ENCODE measurements at regions of chr6 and their contacts with region 1.

Region 1: DNA sequence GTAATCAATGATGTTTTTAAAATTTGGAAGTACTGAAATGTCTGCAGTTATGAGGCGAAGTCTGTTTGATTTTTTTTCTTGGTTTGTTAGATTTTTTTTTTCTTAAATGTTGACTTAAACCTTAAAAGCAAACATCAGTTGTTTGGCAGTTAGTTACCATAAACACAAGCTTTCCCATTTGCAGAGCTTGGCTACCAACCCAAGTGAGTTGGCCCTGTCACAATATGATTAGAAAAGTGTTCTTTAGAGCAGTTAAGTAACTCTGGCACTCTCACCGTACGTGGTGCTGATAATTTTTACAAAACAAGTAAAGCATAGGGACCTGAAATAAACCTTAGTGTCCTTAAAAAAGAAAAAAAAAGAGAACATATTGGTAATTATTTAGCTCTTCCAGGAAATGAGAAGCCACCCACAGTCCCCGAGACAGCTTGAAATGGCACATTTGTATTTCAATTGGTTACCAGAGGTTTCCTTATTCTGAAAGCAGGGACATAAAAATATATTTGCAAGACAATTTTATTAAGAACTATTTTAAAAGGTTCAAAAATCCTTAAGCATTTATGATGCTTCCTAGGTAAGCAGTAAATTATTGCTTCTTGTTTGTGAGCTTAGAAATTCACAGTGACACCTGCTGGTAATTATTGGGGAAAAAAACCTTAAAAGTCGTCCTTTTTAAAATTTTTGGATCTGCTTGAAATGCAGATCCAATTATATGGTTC is 3.9 kb downstream of the HEY2 start:
- DNase-seq: no peak
- H3K4me3 ChIP-seq: no peak overlapping the region
- H3K27ac ChIP-seq: no peak overlapping the region
- H3K4me1 ChIP-seq: peaks cover 14% of the 10 kb centered on the region
- H3K27me3 ChIP-seq: peaks cover 21% of the 10 kb centered on the region
- CTCF ChIP-seq: peak; percentile 23 to 49

Region 2: DNA sequence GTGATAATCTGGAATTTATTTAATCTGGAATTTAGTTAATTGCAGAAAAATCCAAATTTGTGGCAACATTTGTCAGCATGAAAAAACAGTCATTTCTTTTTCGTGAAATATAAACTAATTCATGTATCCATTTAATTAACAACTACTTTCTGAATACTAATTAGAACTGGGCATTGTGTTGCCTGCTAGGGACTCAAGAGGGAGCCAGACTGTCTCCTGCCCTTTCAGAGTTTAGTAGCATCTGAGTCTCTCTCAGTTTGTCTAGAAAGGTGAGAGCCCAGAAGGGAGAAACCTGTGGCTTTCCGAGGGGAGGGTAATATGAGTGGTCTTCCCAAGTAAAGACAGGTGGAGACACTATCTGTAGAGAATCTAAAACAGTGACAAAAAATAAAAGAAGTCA is 240.8 kb before region 1 on chr6:
- CTCF ChIA-PET with region 1: no interaction called
- dilution Hi-C with region 1: no loop called
- in situ Hi-C with region 1: loop called in 1 of 2 experiments (anchors 25 kb)
- intact Hi-C with region 1: loop called (anchors 2 kb)
- DNase-seq: peak; percentile 2
- H3K4me3 ChIP-seq: no peak overlapping the region
- H3K27ac ChIP-seq: no peak overlapping the region
- H3K4me1 ChIP-seq: no peaks in the 10 kb centered on the region
- H3K27me3 ChIP-seq: no peaks in the 10 kb centered on the region
- CTCF ChIP-seq: peak; percentile 52 to 72

Region 3: GRCh38 chr6:125679651-125680050 is 73.7 kb before region 1 on chr6:
- CTCF ChIA-PET with region 1: no interaction called
- dilution Hi-C with region 1: loop called (anchors 5 kb)
- in situ Hi-C with region 1: no loop called
- intact Hi-C with region 1: no loop called
- DNase-seq: no peak
- H3K4me3 ChIP-seq: no peak overlapping the region
- H3K27ac ChIP-seq: no peak overlapping the region
- H3K4me1 ChIP-seq: no peaks in the 10 kb centered on the region
- H3K27me3 ChIP-seq: no peaks in the 10 kb centered on the region
- CTCF ChIP-seq: no peak

Region 4: DNA sequence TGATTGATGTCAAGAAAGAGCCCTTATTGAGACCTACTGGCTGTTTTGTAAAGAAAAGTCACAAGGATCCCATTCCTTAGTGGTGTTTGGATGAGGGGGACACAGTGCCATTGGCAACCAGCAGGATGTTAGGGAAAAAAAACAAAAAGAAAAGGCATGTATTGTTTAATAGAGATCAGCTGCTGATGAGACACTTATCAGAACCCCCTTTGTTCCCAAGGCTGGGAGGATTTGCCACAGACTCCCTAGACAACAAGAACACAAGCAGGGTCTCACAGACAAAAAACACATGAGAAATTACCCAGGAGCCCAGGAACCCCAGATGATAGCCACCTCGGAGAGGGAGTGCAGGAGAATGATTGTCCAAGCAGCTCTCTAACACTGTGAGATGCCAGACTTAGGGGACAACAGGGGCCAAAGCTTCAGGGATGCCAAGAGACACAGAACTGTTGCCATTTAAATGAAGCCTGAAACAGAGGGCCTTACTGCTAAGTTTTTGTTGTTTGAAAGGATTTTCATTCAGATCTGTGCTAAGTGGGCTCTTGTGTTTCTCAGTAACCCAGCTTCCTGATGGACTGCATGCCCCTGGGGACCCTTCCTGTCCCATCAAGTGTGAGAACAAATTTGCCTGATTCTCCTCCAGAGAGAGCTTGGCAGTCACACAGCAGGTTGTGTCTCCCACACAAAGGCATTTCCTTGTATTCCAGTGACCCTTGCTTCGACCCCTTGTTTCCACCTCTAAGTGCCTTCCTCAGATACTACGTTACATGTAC is 52.6 kb before region 1 on chr6:
- CTCF ChIA-PET with region 1: no interaction called
- dilution Hi-C with region 1: no loop called
- in situ Hi-C with region 1: no loop called
- intact Hi-C with region 1: no loop called
- DNase-seq: no peak
- H3K4me3 ChIP-seq: no peak overlapping the region
- H3K27ac ChIP-seq: no peak overlapping the region
- H3K4me1 ChIP-seq: no peaks in the 10 kb centered on the region
- H3K27me3 ChIP-seq: peaks cover 2% of the 10 kb centered on the region
- CTCF ChIP-seq: no peak

Region 5: GRCh38 chr6:125963817-125964216 is 210.4 kb after region 1 on chr6:
- CTCF ChIA-PET with region 1: interaction called, 17 read pairs
- dilution Hi-C with region 1: no loop called
- in situ Hi-C with region 1: no loop called
- intact Hi-C with region 1: no loop called
- DNase-seq: no peak
- H3K4me3 ChIP-seq: no peak overlapping the region
- H3K27ac ChIP-seq: no peak overlapping the region
- H3K4me1 ChIP-seq: no peaks in the 10 kb centered on the region
- H3K27me3 ChIP-seq: no peaks in the 10 kb centered on the region
- CTCF ChIP-seq: no peak